ENCODE measurements at regions of chr1 and their contacts with region 1.

Region 1: GRCh38 chr1:85276215-85276977 is at the start of gene BCL10:
- DNase-seq: peak; percentile 94 to 98 (median 97)
- ATAC-seq: peak; percentile 95 to 97
- H3K4me3 Mint-ChIP-seq: peak within 1 kb of the TSS; percentile 81 to 95 (median 90)
- H3K27ac Mint-ChIP-seq: peak within 1 kb of the TSS; percentile 77 to 97 (median 96)
- H3K4me1 Mint-ChIP-seq: peaks cover 34 to 65% (median 44%) of the 10 kb centered on the region in 4 donors
- H3K27me3 Mint-ChIP-seq: no peaks in the 10 kb centered on the region
- polyA plus RNA-seq, gene BCL10: 11.6 to 18.7 (median 15.5) TPM

Region 2: DNA sequence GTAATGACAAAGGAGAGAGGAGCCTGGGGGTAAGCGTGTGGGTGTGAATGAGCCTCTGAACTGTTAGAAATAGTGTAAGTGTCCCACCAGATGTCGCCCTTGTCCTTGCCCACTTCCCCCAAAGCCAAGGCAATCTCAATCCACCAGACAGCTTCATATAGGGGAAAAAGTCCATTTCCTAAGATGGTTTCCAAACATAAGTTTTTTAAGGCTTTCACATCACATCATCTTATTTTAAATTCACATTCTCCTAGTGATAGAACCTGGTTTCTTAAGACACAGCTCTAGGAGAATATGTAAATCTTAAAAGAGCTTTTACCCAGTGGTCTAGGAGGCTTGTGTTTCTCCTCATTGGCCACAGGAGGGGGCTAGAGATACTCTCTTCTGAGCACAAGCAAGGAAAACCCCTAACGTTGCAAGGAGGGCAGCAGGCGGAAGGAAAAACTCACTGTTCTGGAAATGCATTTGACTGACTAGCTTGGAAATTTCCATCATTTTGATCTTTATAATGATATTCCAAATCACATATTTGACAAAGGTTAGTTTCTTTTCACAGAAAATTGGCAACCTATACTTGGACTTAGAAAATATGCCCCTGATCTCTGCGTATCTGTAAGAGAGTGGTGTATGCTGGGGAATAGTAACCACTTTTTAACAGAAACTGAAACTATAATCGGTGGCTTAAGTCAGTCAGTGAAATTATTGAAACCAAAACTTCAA is 331.5 kb before region 1 on chr1:
- POLR2A ChIA-PET with region 1: interaction called, 11 read pairs
- DNase-seq: peak; percentile 22 to 95 (median 81)
- ATAC-seq: peak; percentile 90 to 92
- H3K4me3 Mint-ChIP-seq: peak overlapping the region; percentile 70 to 92 (median 88)
- H3K27ac Mint-ChIP-seq: peak overlapping the region; percentile 87 to 99 (median 98)
- H3K4me1 Mint-ChIP-seq: peaks cover 0 to 17% (median 12%) of the 10 kb centered on the region in 4 donors
- H3K27me3 Mint-ChIP-seq: no peaks in the 10 kb centered on the region

Region 3: GRCh38 chr1:85200870-85201339 is 75.5 kb before region 1 on chr1 and contains the start of gene SYDE2:
- POLR2A ChIA-PET with region 1: interaction called, 31 read pairs
- DNase-seq: peak; percentile 77 to 91 (median 88)
- ATAC-seq: peak; percentile 77 to 81
- H3K4me3 Mint-ChIP-seq: peak within 1 kb of the TSS; percentile 93 to 100 (median 98)
- H3K27ac Mint-ChIP-seq: peak within 1 kb of the TSS; percentile 98 to 100 (median 99)
- H3K4me1 Mint-ChIP-seq: peaks cover 7 to 46% (median 41%) of the 10 kb centered on the region in 4 donors
- H3K27me3 Mint-ChIP-seq: peaks cover 0 to 17% (median 0%) of the 10 kb centered on the region in 5 donors
- polyA plus RNA-seq, gene SYDE2: 2.7 to 5.8 (median 3.9) TPM

Region 4: GRCh38 chr1:85259118-85259911 is 17.1 kb before region 1 on chr1 and contains the start of gene C1orf52:
- POLR2A ChIA-PET with region 1: interaction called, 48 read pairs
- DNase-seq: peak; percentile 90 to 98 (median 96)
- ATAC-seq: peak; percentile 92 to 96
- H3K4me3 Mint-ChIP-seq: peak within 1 kb of the TSS; percentile 94 to 99 (median 97)
- H3K27ac Mint-ChIP-seq: peak within 1 kb of the TSS; percentile 91 to 99 (median 98)
- H3K4me1 Mint-ChIP-seq: peaks cover 23 to 42% (median 39%) of the 10 kb centered on the region in 4 donors
- H3K27me3 Mint-ChIP-seq: no peaks in the 10 kb centered on the region
- polyA plus RNA-seq, gene C1orf52: 15.3 to 28.7 (median 22.4) TPM

Region 5: GRCh38 chr1:85707990-85708828 is 431.8 kb after region 1 on chr1 and contains the start of gene ZNHIT6:
- POLR2A ChIA-PET with region 1: interaction called, 14 read pairs
- DNase-seq: peak; percentile 66 to 93 (median 84)
- ATAC-seq: peak; percentile 89 to 90
- H3K4me3 Mint-ChIP-seq: no peak within 1 kb of the TSS
- H3K27ac Mint-ChIP-seq: no peak within 1 kb of the TSS
- H3K4me1 Mint-ChIP-seq: peaks cover 0 to 29% (median 21%) of the 10 kb centered on the region in 4 donors
- H3K27me3 Mint-ChIP-seq: peaks cover 0 to 3% (median 0%) of the 10 kb centered on the region in 5 donors
- polyA plus RNA-seq, gene ZNHIT6: 19.0 to 23.3 (median 23.2) TPM

Measured in naive thymus-derived CD8-positive, alpha-beta T cell (primary cell).